CD14-positive monocyte (primary cell): ENCODE measurements at regions of chr1 and their contacts with region 1.

Region 1: DNA sequence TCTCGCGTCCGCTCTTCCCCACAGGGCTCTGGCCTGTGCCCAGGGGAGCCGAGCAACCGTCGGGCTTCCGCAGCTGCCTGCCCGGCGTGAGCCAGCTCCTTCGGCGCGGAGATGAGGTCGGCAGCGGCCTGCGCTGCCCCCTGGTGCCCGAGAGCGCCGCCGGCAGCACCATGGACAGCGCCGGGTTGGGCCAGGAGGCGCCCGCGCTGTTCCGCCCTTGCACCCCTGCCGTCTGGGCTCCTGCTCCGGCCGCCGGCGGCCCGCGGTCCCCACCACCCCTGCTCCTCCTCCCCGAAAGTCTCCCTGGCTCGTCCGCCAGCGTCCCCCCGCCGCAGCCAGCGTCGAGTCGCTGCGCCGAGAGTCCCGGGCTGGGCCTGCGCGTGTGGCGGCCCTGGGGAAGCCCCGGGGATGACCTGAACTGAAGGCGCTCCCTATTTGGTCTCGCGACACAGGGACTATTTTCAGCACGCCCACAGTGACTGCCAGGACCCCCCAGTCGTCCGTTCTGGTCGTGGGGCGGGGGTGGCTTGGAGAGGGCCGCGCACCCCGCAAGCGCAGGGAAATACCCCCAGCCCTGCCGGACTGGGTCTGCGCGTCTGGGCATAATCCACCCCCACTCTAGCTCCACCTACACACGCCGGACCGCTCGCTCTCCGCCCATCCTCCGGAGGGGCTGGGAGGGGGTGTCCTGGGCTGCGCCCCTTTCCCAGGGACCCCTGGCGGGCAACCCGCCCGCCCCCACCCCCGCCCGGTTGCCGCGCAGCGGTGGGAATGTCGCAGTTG is 1.3 kb downstream of the HES3 start:
- DNase-seq: peak; percentile 63 to 76 (median 69)
- H3K4me3 ChIP-seq: peak overlapping the region in 1 of 3 experiments; percentile 17
- H3K4me3 Mint-ChIP-seq: no peak overlapping the region
- H3K27ac ChIP-seq: no peak overlapping the region
- H3K27ac Mint-ChIP-seq: no peak overlapping the region
- H3K4me1 ChIP-seq: peaks cover 0 to 21% of the 10 kb centered on the region in 2 donors
- H3K4me1 Mint-ChIP-seq: peaks cover 10% of the 10 kb centered on the region
- H3K27me3 ChIP-seq: peaks cover 24 to 84% of the 10 kb centered on the region in 2 donors
- H3K27me3 Mint-ChIP-seq: peaks cover 74 to 90% (median 83%) of the 10 kb centered on the region in 3 donors
- CTCF ChIP-seq: peak; percentile 83

Region 2: GRCh38 chr1:6052543-6053205 is 192.6 kb before region 1 on chr1:
- intact Hi-C with region 1: loop called (anchors 2 to 10 kb)
- DNase-seq: peak in 1 of 3 donors; percentile 15
- H3K4me3 ChIP-seq: no peak overlapping the region
- H3K4me3 Mint-ChIP-seq: no peak overlapping the region
- H3K27ac ChIP-seq: no peak overlapping the region
- H3K27ac Mint-ChIP-seq: peak overlapping the region in 3 of 7 donors; percentile 57 to 67 (median 58)
- H3K4me1 ChIP-seq: peaks cover 33 to 36% of the 10 kb centered on the region in 2 donors
- H3K4me1 Mint-ChIP-seq: peaks cover 42% of the 10 kb centered on the region
- H3K27me3 ChIP-seq: no peaks in the 10 kb centered on the region
- H3K27me3 Mint-ChIP-seq: peaks cover 0 to 1% (median 0%) of the 10 kb centered on the region in 3 donors
- CTCF ChIP-seq: peak; percentile 56

Region 3: GRCh38 chr1:6108937-6109614 is 136.2 kb before region 1 on chr1:
- intact Hi-C with region 1: loop called (anchors 10 kb)
- DNase-seq: peak; percentile 15 to 39 (median 16)
- H3K4me3 ChIP-seq: no peak overlapping the region
- H3K4me3 Mint-ChIP-seq: no peak overlapping the region
- H3K27ac ChIP-seq: no peak overlapping the region
- H3K27ac Mint-ChIP-seq: no peak overlapping the region
- H3K4me1 ChIP-seq: no peaks in the 10 kb centered on the region
- H3K4me1 Mint-ChIP-seq: no peaks in the 10 kb centered on the region
- H3K27me3 ChIP-seq: no peaks in the 10 kb centered on the region
- H3K27me3 Mint-ChIP-seq: peaks cover 8 to 13% (median 12%) of the 10 kb centered on the region in 3 donors
- CTCF ChIP-seq: peak; percentile 65

Region 4: GRCh38 chr1:6127587-6128163 is 117.6 kb before region 1 on chr1:
- intact Hi-C with region 1: loop called in 1 of 2 experiments (anchors 5 kb)
- DNase-seq: peak; percentile 60 to 81 (median 72)
- H3K4me3 ChIP-seq: no peak overlapping the region
- H3K4me3 Mint-ChIP-seq: peak overlapping the region; percentile 48 to 63
- H3K27ac ChIP-seq: no peak overlapping the region
- H3K27ac Mint-ChIP-seq: no peak overlapping the region
- H3K4me1 ChIP-seq: peaks cover 14 to 18% of the 10 kb centered on the region in 2 donors
- H3K4me1 Mint-ChIP-seq: peaks cover 22% of the 10 kb centered on the region
- H3K27me3 ChIP-seq: no peaks in the 10 kb centered on the region
- H3K27me3 Mint-ChIP-seq: peaks cover 4 to 14% (median 12%) of the 10 kb centered on the region in 3 donors
- CTCF ChIP-seq: no peak

Region 5: DNA sequence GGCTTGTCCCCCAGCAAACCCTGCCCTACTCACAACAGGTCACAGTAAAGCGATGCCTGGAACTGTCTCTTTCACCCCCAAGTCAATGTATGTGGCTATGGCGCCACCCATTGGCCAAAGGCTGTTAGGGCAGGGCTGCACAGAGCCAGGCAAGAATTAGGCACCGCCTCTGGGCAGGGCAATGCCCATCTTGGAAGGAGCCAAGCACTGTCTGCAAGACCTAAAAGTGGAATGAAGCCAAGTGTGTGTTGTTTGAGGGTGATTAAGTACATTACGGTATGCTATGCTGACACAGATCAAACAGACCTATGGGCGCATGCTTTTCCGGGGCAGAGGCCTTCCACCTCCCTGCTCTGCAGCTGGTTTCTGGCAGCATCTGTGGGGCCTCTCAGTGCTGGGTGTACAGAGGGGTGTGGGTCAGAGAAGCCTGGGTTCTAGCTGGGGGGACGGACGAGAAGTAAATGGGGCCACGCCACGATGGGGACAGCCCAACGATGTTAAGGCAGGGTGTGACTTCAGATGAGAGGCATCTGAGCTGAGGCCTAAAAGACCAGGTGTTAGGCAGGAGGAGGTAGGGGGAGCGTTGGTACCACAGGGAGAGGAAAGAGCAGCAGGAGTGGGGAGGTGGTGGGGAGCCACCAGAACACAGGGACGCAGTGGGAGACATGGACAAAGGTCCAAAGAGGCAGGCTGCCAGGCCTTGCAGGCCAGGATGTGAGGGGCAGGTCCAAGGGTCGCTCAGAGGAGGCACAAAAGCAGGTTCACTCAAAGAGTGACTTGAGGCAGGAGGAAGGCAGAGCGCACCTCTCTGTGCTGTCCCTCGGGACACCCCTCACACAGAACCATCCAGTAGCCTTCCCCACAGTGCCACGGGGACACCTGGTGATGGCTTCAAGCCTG is 98.5 kb after region 1 on chr1:
- intact Hi-C with region 1: loop called (anchors 5 kb)
- DNase-seq: peak in 2 of 3 donors; percentile 8 to 18
- H3K4me3 ChIP-seq: no peak overlapping the region
- H3K4me3 Mint-ChIP-seq: no peak overlapping the region
- H3K27ac ChIP-seq: no peak overlapping the region
- H3K27ac Mint-ChIP-seq: no peak overlapping the region
- H3K4me1 ChIP-seq: peaks cover 4 to 10% of the 10 kb centered on the region in 2 donors
- H3K4me1 Mint-ChIP-seq: peaks cover 13% of the 10 kb centered on the region
- H3K27me3 ChIP-seq: no peaks in the 10 kb centered on the region
- H3K27me3 Mint-ChIP-seq: peaks cover 1 to 7% (median 2%) of the 10 kb centered on the region in 3 donors
- CTCF ChIP-seq: peak; percentile 67

Region 6: GRCh38 chr1:6401673-6402072 is 156.4 kb after region 1 on chr1:
- intact Hi-C with region 1: loop called (anchors 2 kb)
- DNase-seq: peak; percentile 82 to 86 (median 83)
- H3K4me3 ChIP-seq: no peak overlapping the region
- H3K4me3 Mint-ChIP-seq: no peak overlapping the region
- H3K27ac ChIP-seq: peak overlapping the region in 1 of 2 donors; percentile 31
- H3K27ac Mint-ChIP-seq: peak overlapping the region in 5 of 7 donors; percentile 57 to 84 (median 71)
- H3K4me1 ChIP-seq: peaks cover 4 to 11% of the 10 kb centered on the region in 2 donors
- H3K4me1 Mint-ChIP-seq: peaks cover 11% of the 10 kb centered on the region
- H3K27me3 ChIP-seq: no peaks in the 10 kb centered on the region
- H3K27me3 Mint-ChIP-seq: peaks cover 16 to 25% (median 23%) of the 10 kb centered on the region in 3 donors
- CTCF ChIP-seq: no peak

Region 7: DNA sequence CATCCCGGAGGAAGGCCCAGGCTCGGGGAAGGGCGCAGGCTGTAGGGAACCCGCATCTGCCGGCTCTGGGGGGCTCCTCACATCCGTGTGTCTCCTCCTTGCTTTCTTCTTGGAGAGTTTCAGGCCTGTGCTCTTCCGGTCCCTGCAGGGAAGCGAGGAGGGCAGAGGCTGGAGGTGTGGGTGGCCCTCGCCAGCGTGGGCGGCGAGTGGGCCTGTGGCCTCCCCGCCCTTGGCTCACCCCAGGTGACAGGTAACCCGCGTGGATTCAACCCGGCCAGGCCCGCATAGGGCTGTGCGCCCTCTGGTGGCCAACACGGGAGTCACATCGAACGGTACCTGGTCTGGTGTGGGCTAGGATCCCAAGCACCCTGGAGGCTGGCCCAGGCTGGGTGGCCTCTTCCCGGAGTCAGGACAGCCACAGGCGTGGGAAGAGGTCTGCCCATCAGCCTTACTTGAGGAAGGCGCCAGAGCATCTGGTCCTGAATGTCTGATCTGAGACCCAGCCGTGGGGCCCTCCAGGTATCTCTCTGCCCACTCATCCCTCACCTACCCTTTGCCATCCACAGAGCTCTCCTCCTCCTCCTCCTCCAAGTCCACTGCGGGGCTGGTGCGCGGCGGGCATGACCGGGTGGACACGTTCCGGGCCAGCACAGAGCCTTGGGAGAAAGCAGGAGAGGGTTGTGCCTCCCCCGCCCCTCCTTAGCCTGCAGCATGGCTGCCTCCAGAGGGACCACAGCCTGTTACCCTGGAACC is 230.3 kb after region 1 on chr1:
- intact Hi-C with region 1: loop called in 1 of 2 experiments (anchors 5 kb)
- DNase-seq: peak; percentile 14 to 43 (median 33)
- H3K4me3 ChIP-seq: no peak overlapping the region
- H3K4me3 Mint-ChIP-seq: no peak overlapping the region
- H3K27ac ChIP-seq: no peak overlapping the region
- H3K27ac Mint-ChIP-seq: peak overlapping the region in 1 of 7 donors; percentile 68
- H3K4me1 ChIP-seq: no peaks in the 10 kb centered on the region
- H3K4me1 Mint-ChIP-seq: no peaks in the 10 kb centered on the region
- H3K27me3 ChIP-seq: no peaks in the 10 kb centered on the region
- H3K27me3 Mint-ChIP-seq: peaks cover 6 to 9% (median 6%) of the 10 kb centered on the region in 3 donors
- CTCF ChIP-seq: peak; percentile 97